ENCODE measurements at regions of chr9 and their contacts with region 1.

Region 1: GRCh38 chr9:4984621-4985385 is at the start of gene JAK2:
- DNase-seq: peak; percentile 89
- ATAC-seq: peak; percentile 76
- H3K4me3 ChIP-seq: peak within 1 kb of the TSS; percentile 67 to 88 (median 80)
- H3K4me3 Mint-ChIP-seq: peak within 1 kb of the TSS; percentile 94
- H3K27ac ChIP-seq: peak within 1 kb of the TSS; percentile 67 to 80
- H3K27ac Mint-ChIP-seq: peak within 1 kb of the TSS; percentile 97
- H3K4me1 ChIP-seq: peaks cover 32 to 34% of the 10 kb centered on the region in 2 donors
- H3K4me1 Mint-ChIP-seq: peaks cover 38% of the 10 kb centered on the region
- H3K27me3 ChIP-seq: no peaks in the 10 kb centered on the region
- H3K27me3 Mint-ChIP-seq: no peaks in the 10 kb centered on the region
- CTCF ChIP-seq: peak; percentile 25
- total RNA-seq, gene JAK2: 24.6 and 26.4 TPM in 2 replicates

Region 2: DNA sequence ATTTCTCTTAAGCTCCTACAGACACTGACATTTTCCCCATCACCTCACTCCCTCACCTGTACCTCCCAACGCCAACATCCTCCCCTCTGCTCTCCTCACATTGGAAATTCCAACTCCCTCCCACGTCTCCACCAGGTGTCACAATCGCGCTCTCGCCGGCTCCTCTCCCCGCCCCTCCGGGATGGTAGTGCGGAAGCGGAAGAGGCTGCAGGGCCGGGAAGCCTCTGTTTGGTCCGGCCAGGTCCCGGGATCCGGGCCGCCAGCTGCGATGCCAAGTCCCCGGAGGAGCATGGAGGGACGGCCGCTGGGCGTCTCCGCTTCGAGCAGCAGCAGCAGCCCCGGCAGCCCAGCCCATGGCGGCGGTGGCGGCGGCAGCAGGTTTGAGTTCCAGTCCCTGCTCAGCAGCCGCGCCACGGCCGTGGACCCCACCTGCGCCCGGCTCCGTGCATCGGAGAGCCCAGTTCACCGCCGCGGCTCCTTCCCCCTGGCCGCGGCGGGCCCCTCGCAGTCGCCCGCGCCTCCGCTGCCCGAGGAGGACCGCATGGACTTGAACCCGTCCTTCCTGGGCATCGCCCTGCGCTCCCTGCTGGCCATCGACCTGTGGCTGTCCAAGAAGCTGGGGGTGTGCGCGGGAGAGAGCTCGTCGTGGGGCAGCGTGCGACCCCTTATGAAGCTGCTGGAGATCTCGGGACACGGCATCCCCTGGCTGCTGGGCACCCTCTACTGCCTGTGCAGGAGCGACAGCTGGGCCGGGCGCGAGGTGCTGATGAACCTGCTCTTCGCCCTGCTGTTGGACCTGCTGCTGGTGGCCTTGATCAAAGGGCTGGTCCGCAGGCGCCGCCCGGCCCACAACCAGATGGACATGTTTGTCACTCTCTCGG is 322.5 kb before region 1 on chr9 and contains the start of gene PLPP6:
- CTCF ChIA-PET with region 1: no interaction called
- POLR2A ChIA-PET with region 1: no interaction called
- intact Hi-C with region 1: loop called (anchors 5 kb)
- DNase-seq: peak; percentile 86
- ATAC-seq: peak; percentile 85
- H3K4me3 ChIP-seq: peak within 1 kb of the TSS; percentile 39 to 92 (median 74)
- H3K4me3 Mint-ChIP-seq: peak within 1 kb of the TSS; percentile 96
- H3K27ac ChIP-seq: peak within 1 kb of the TSS; percentile 42 to 57
- H3K27ac Mint-ChIP-seq: peak within 1 kb of the TSS; percentile 91
- H3K4me1 ChIP-seq: peaks cover 48 to 50% of the 10 kb centered on the region in 2 donors
- H3K4me1 Mint-ChIP-seq: peaks cover 46% of the 10 kb centered on the region
- H3K27me3 ChIP-seq: peaks cover 0 to 5% (median under 1%) of the 10 kb centered on the region in 4 experiments
- H3K27me3 Mint-ChIP-seq: peaks cover 12% of the 10 kb centered on the region
- CTCF ChIP-seq: peak; percentile 51
- total RNA-seq, gene PLPP6: 12.8 and 14.3 TPM in 2 replicates

Region 3: GRCh38 chr9:4750023-4750673 is 234.7 kb before region 1 on chr9:
- CTCF ChIA-PET with region 1: interaction called, 11 read pairs
- POLR2A ChIA-PET with region 1: no interaction called
- intact Hi-C with region 1: no loop called
- DNase-seq: peak; percentile 59
- ATAC-seq: peak; percentile 33
- H3K4me3 ChIP-seq: no peak overlapping the region
- H3K4me3 Mint-ChIP-seq: no peak overlapping the region
- H3K27ac ChIP-seq: no peak overlapping the region
- H3K27ac Mint-ChIP-seq: no peak overlapping the region
- H3K4me1 ChIP-seq: no peaks in the 10 kb centered on the region
- H3K4me1 Mint-ChIP-seq: no peaks in the 10 kb centered on the region
- H3K27me3 ChIP-seq: no peaks in the 10 kb centered on the region
- H3K27me3 Mint-ChIP-seq: no peaks in the 10 kb centered on the region
- CTCF ChIP-seq: peak; percentile 77

Region 4: GRCh38 chr9:4774209-4774608 is 210.6 kb before region 1 on chr9:
- CTCF ChIA-PET with region 1: no interaction called
- POLR2A ChIA-PET with region 1: no interaction called
- intact Hi-C with region 1: no loop called
- DNase-seq: no peak
- ATAC-seq: no peak
- H3K4me3 ChIP-seq: no peak overlapping the region
- H3K4me3 Mint-ChIP-seq: no peak overlapping the region
- H3K27ac ChIP-seq: no peak overlapping the region
- H3K27ac Mint-ChIP-seq: no peak overlapping the region
- H3K4me1 ChIP-seq: no peaks in the 10 kb centered on the region
- H3K4me1 Mint-ChIP-seq: no peaks in the 10 kb centered on the region
- H3K27me3 ChIP-seq: no peaks in the 10 kb centered on the region
- H3K27me3 Mint-ChIP-seq: peaks cover 2% of the 10 kb centered on the region
- CTCF ChIP-seq: no peak

Region 5: GRCh38 chr9:4849364-4849763 is 135.4 kb before region 1 on chr9:
- CTCF ChIA-PET with region 1: interaction called, 22 read pairs
- POLR2A ChIA-PET with region 1: no interaction called
- intact Hi-C with region 1: loop called (anchors 5 kb)
- DNase-seq: no peak
- ATAC-seq: no peak
- H3K4me3 ChIP-seq: no peak overlapping the region
- H3K4me3 Mint-ChIP-seq: no peak overlapping the region
- H3K27ac ChIP-seq: no peak overlapping the region
- H3K27ac Mint-ChIP-seq: no peak overlapping the region
- H3K4me1 ChIP-seq: no peaks in the 10 kb centered on the region
- H3K4me1 Mint-ChIP-seq: no peaks in the 10 kb centered on the region
- H3K27me3 ChIP-seq: no peaks in the 10 kb centered on the region
- H3K27me3 Mint-ChIP-seq: no peaks in the 10 kb centered on the region
- CTCF ChIP-seq: no peak

Region 6: DNA sequence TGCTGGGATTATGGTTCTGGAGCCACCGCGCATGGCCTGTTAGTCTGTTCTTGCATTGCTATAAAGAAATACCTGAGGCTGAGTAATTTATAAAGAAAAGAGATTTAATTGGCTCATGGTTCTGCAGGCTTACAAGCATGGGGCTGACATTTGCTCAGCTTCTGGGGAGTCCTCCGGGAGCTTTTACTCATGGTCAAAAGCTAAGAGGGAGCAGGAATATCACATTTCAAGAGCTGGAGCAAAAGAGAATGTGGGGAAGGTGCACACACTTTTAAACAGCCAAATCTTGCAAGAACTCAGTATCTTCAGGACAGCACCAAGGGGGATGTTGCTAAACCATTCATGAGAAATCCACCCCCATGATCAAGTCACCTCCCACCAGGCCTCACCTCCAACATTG is 12.4 kb after region 1 on chr9:
- CTCF ChIA-PET with region 1: interaction called, 17 read pairs
- POLR2A ChIA-PET with region 1: no interaction called
- intact Hi-C with region 1: no loop called
- DNase-seq: no peak
- ATAC-seq: no peak
- H3K4me3 ChIP-seq: no peak overlapping the region
- H3K4me3 Mint-ChIP-seq: no peak overlapping the region
- H3K27ac ChIP-seq: no peak overlapping the region
- H3K27ac Mint-ChIP-seq: no peak overlapping the region
- H3K4me1 ChIP-seq: peaks cover 0 to 5% of the 10 kb centered on the region in 2 donors
- H3K4me1 Mint-ChIP-seq: peaks cover 18% of the 10 kb centered on the region
- H3K27me3 ChIP-seq: no peaks in the 10 kb centered on the region
- H3K27me3 Mint-ChIP-seq: no peaks in the 10 kb centered on the region
- CTCF ChIP-seq: no peak

Region 7: GRCh38 chr9:6008169-6008979 is 1023.6 kb after region 1 on chr9:
- CTCF ChIA-PET with region 1: no interaction called
- POLR2A ChIA-PET with region 1: no interaction called
- intact Hi-C with region 1: loop called (anchors 5 kb)
- DNase-seq: peak; percentile 97
- ATAC-seq: peak; percentile 72
- H3K4me3 ChIP-seq: peak overlapping the region; percentile 43 to 89 (median 73)
- H3K4me3 Mint-ChIP-seq: peak overlapping the region; percentile 95
- H3K27ac ChIP-seq: peak overlapping the region; percentile 86 to 91
- H3K27ac Mint-ChIP-seq: peak overlapping the region; percentile 89
- H3K4me1 ChIP-seq: peaks cover 17 to 21% of the 10 kb centered on the region in 2 donors
- H3K4me1 Mint-ChIP-seq: peaks cover 49% of the 10 kb centered on the region
- H3K27me3 ChIP-seq: no peaks in the 10 kb centered on the region
- H3K27me3 Mint-ChIP-seq: no peaks in the 10 kb centered on the region
- CTCF ChIP-seq: no peak

Measured in B cell (primary cell).